Motor neuron (in vitro differentiated cells): ENCODE measurements at regions of chr5 and their contacts with region 1.

Region 1: DNA sequence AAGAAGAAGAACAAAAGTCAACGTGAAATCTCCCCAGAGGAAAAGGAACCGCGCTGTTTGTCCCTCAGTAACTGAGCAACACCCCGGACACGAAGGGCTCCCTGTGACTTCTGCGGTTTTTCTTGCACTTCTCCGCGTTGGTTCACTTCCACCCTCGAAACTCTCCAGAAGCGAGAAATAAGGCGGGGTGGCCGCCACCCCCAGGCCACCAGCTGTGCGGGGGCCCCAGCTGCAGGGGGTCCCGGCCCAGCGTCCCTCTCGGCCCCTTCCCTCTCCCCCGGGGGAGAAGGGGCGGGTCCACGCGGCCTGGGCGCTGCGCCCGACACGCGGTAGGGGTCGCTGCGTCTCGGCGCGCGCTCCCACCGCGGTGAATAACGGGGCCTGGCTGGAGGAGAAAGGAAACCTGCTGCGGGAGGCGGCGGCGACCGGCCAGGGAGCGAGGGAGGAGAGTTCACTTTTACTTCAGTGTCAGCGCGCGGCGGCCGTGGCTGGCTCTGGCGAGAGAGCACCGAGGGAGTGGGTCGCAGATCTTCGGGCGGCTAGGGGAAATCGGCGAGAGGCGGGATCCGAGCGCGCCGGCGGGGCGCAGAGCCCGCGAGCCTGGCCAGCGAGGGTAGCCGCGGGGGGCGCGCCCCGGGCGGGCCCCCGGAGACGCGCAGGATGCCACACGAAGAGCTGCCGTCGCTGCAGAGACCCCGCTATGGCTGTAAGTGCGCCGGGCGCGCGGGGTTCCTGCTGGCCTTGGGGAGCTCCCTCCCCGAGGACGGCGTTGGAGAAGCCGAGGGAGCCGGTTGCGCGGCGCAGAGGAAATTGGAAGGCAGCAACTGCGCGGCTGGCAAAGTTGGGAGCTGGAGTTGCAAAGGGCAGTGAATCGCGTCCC is at the start of gene IQGAP2:
- ATAC-seq: peak; percentile 79 to 92 (median 90)
- H3K4me3 ChIP-seq: peak within 1 kb of the TSS; percentile 51 to 79 (median 65)
- H3K27ac ChIP-seq: peak within 1 kb of the TSS; percentile 3 to 76
- H3K4me1 ChIP-seq: peaks cover 10 to 25% of the 10 kb centered on the region in 2 donors
- total RNA-seq, gene IQGAP2: 6.3 to 74.8 (median 14.2) TPM

Region 2: DNA sequence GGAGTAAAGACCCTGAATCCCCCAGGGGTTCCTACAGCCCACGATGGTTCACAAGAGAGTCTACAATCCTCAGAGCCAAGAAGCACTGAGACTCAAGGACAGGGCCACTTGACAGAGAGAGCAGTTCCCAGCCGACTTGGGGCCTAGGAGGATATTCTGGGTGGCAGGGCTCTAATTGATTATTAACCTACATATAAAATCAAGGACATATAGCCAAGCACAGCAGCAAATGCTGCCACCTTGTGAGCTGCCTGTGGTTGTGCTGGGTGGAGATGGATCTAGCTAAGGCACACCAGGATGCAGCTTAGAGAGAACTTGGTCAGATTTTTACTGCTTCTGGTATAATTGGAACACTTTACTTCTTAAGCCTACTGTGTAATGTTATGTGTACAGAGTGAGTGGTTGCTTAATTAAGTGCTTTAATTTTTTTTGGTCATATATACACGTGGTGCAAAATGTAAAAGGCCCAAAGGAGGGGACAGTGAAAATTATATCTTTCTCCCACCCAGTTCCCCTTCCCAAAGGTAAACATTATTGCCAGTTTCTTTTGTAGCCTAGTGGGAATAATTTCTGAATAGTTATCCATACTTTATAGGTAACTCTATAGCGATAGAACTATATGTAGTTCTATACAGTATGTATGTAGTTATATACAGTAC is 141.3 kb after region 1 on chr5:
- in situ Hi-C with region 1: loop called in 2 of 9 experiments (anchors 10 kb)
- ATAC-seq: peak; percentile 53 to 93 (median 89)
- H3K4me3 ChIP-seq: no peak overlapping the region
- H3K27ac ChIP-seq: no peak overlapping the region
- H3K4me1 ChIP-seq: peaks cover 17 to 26% of the 10 kb centered on the region in 2 donors